ENCODE measurements at regions of chr22 and their contacts with region 1.

Region 1: GRCh38 chr22:37525073-37525748 is 6.0 kb upstream of the CARD10 start:
- DNase-seq: peak; percentile 52
- H3K4me3 ChIP-seq: peak overlapping the region; percentile 29; the same call in 1 of the 2 replicates
- H3K27ac ChIP-seq: peak overlapping the region; percentile 83
- H3K27me3 ChIP-seq: no peaks in the 10 kb centered on the region
- CTCF ChIP-seq: no peak

Region 2: GRCh38 chr22:36595940-36596339 is 929.3 kb before region 1 on chr22:
- CTCF ChIA-PET with region 1: no interaction called
- POLR2A ChIA-PET with region 1: no interaction called
- DNase-seq: no peak
- H3K4me3 ChIP-seq: no peak overlapping the region
- H3K27ac ChIP-seq: no peak overlapping the region
- H3K27me3 ChIP-seq: peaks cover 33% of the 10 kb centered on the region
- CTCF ChIP-seq: no peak

Region 3: DNA sequence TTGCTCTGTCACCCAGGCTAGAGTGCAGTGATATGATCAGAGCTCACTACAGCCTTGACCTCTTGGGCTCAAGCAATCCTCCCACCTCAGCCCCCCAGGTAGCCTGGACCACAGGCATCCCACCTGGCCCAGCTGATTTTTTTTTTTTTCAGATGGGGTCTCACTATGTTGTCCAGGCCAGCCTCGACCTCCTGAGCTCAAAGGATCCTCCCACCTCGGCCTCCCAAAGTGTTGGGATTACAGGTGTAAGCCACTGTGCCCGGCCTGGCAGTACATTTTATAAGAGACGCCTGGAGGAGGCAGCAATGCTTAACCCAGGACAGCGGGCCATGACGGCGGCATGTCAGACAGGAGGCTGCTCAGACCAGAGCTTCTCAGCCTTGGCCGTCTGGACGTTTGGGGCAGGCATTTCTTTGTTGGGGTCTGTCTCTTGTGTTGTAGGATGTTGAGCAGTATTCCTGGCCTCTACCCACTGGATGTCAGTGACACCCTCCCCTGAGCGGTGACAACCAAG is 50.3 kb after region 1 on chr22:
- CTCF ChIA-PET with region 1: no interaction called
- POLR2A ChIA-PET with region 1: interaction called, 13 read pairs
- DNase-seq: no peak
- H3K4me3 ChIP-seq: no peak overlapping the region
- H3K27ac ChIP-seq: no peak overlapping the region
- H3K27me3 ChIP-seq: peaks cover 1% of the 10 kb centered on the region
- CTCF ChIP-seq: no peak